Activated CD4-positive, alpha-beta T cell treated with anti-CD3 and anti-CD28 coated beads for 36 hours (primary cell): ENCODE measurements at regions of chr6 and their contacts with region 1.

Region 1: GRCh38 chr6:31822036-31822821 is 5.3 kb upstream of the HSPA1B start:
- DNase-seq: peak; percentile 79
- ATAC-seq: peak; percentile 54
- H3K4me3 Mint-ChIP-seq: peak overlapping the region; percentile 89
- H3K27ac Mint-ChIP-seq: peak overlapping the region; percentile 97
- H3K4me1 Mint-ChIP-seq: peaks cover 67% of the 10 kb centered on the region
- H3K27me3 Mint-ChIP-seq: no peaks in the 10 kb centered on the region

Region 2: GRCh38 chr6:31806465-31807272 is 15.6 kb before region 1 on chr6 and contains the start of gene LSM2:
- CTCF ChIA-PET with region 1: interaction called, 11 read pairs
- POLR2A ChIA-PET with region 1: interaction called, 20 read pairs
- intact Hi-C with region 1: loop called in 1 of 2 experiments (anchors 1 kb)
- DNase-seq: peak; percentile 99
- ATAC-seq: peak; percentile 99
- H3K4me3 Mint-ChIP-seq: peak within 1 kb of the TSS; percentile 91
- H3K27ac Mint-ChIP-seq: peak within 1 kb of the TSS; percentile 94
- H3K4me1 Mint-ChIP-seq: peaks cover 22% of the 10 kb centered on the region
- H3K27me3 Mint-ChIP-seq: no peaks in the 10 kb centered on the region
- total RNA-seq, gene LSM2: 112 to 124 TPM